ENCODE measurements at regions of chr19 and their contacts with region 1.

Region 1: DNA sequence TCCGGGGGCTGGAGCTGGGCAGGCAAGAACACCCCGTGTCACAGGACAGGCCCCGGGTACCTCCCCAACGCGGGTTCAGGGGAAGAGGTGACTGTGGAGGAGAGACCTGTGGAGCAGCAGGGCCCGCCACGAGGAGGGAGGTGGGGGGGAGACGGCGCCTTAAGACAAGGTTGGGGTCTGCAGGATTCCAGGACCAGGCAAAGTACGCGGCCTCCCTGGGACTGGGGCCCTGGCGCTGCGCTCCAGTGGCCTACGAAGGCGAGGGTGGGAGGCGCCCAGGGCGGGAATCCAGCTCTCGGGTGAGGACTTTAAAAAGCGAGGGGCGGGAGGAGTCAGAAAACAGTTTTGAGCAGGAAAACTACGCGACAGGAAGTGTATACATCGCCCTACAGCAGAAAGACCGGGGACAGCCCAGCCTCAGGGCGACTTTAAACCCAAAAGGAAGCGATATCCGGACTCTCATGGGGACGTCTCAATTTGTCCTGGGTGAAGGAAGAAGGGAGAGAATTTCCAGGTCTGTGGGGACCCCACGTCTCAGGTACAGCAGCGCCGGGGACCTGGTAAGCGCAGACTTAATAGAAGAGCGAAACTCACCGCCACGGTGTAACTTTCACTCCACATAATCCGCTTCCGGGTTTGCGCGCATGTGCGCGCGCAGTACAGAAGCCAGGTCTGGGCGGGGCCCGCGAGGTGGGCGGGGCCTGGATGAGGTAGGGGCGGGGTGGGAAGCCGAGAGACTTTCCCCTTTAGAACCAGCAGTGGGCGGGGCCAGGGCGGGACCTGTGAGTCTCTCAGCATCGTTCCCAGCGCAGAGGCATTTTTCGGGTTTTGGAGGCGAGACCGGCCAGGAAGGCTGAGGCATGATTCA is at the start of gene ZNF83:
- DNase-seq: peak; percentile 95
- total RNA-seq, gene ZNF83: 16.8 TPM

Region 2: GRCh38 chr19:52601025-52601973 is 36.7 kb before region 1 on chr19:
- intact Hi-C with region 1: loop called (anchors 5 kb)
- DNase-seq: peak; percentile 98

Measured in cardiac septum (tissue), 1 donor.